CD8-positive, alpha-beta T cell (primary cell): ENCODE measurements at regions of chrX and their contacts with region 1.

Region 1: DNA sequence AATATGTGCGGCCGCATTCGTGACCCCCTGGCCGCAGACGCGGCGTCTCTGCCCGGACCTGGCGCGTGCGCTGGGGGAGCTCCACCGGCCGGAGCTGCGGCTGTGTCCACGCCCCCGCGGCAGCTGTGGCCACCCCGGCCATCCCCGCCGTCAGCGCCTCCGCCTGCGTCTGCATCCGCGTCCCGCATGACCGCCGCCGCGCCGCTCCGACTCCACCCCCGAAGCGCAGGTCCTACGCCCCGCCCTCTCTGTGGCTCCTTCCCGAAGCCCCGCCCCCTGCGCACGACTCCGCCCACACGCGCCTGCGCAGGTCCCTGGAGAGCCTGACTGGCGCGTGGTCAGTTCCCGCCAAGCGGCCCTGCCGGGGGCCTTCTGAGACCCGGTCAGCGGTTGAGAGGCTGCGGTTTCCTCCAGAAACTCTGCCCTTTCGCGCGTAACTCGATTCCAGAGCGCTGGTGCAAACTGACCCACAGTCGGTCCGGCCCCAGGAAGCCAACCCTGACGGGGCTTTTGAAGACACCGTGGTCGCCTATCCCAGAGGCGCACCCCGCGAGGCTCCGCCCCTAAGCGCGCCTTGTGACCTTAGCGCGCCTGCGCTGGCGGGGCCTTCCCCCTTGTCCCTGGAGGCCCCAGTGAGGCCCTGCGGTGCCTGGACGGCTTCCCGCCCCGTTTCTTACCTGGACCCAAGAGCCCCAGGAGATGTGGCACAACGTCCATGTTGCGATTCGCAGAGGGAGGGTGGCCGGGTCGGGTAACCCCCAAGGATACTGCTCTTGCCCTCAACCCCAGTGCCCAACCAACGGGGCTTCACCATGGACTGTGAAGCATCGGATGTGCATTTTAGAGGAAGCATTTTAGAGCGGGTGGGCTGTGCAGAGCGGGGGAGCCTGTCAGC is at the start of gene LAGE3:
- DNase-seq: peak; percentile 86 to 98 (median 93)
- ATAC-seq: peak; percentile 93
- H3K4me3 ChIP-seq: peak within 1 kb of the TSS; percentile 54 to 72
- H3K4me3 Mint-ChIP-seq: peak within 1 kb of the TSS; percentile 82
- H3K27ac ChIP-seq: peak within 1 kb of the TSS; percentile 66 to 82
- H3K27ac Mint-ChIP-seq: peak within 1 kb of the TSS; percentile 84
- H3K4me1 ChIP-seq: peaks cover 28% of the 10 kb centered on the region
- H3K4me1 Mint-ChIP-seq: peaks cover 25% of the 10 kb centered on the region
- H3K27me3 ChIP-seq: no peaks in the 10 kb centered on the region
- H3K27me3 Mint-ChIP-seq: no peaks in the 10 kb centered on the region
- CTCF ChIP-seq: no peak
- total RNA-seq, gene LAGE3: 6.3 to 6.6 TPM

Region 2: DNA sequence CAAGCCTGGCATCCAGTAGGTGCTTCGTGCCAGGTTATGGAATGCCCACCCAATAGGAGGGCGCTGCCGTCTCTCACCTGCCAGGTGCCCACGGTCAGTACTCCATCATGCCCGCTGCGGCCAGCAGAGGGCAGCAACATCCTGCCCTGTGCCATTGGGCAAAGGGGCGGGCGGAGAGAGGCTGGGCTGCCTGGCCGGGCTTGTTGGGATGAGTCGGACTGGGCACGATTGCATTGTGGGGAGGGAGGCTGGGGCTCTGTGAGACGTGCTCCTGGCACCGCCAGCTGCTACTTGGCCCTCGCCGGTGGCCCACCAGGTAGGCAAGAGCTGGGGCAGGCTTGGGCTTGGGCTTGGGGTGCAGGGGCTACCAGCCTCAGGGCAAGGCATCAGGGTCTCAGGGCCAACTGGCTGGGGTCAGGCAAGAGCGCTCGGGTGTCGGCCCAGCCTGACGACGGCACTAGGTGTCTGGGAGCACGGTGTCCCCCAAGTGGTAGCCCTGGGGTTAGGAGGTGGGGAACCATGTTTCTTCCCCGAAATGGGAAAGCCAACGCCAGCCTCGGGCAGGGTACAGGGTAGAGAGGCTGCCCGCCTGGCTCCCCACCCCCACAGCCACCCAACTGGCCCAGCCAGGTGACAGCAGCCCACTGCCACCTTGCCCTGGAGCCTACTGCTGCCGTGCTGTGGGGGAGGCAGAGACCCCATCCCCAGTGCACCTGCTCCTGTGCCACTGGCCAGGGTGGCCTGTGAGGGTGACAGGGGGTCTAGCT is 714.8 kb before region 1 on chrX and contains the start of gene PLXNB3:
- CTCF ChIA-PET with region 1: no interaction called
- POLR2A ChIA-PET with region 1: no interaction called
- intact Hi-C with region 1: no loop called
- DNase-seq: peak; percentile 45 to 89 (median 70)
- ATAC-seq: peak; percentile 88
- H3K4me3 ChIP-seq: no peak within 1 kb of the TSS
- H3K4me3 Mint-ChIP-seq: no peak within 1 kb of the TSS
- H3K27ac ChIP-seq: no peak within 1 kb of the TSS
- H3K27ac Mint-ChIP-seq: no peak within 1 kb of the TSS
- H3K4me1 ChIP-seq: peaks cover 10% of the 10 kb centered on the region
- H3K4me1 Mint-ChIP-seq: peaks cover 10% of the 10 kb centered on the region
- H3K27me3 ChIP-seq: no peaks in the 10 kb centered on the region
- H3K27me3 Mint-ChIP-seq: no peaks in the 10 kb centered on the region
- CTCF ChIP-seq: peak; percentile 52
- total RNA-seq, gene PLXNB3: 0.35 to 0.50 TPM

Region 3: DNA sequence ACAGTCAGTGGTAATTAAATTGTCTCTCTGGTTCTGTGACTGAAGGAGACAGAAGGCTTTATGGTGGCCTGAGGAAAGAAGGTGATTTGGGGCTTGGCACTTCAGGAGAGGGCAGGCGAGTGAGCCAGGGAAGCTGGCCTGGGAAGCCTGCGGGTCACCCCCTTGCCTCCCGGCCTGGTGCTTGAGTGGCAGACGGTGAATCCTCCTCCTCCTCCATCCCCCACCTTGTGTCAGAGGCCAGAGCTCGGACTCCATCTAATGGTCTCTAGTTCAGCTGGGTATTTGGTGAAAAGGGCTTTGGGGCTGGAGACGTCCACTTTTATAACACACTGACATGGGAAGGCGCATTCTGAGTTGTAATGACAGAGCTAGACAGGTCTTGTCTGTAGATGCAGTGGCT is 497.7 kb before region 1 on chrX:
- CTCF ChIA-PET with region 1: no interaction called
- POLR2A ChIA-PET with region 1: no interaction called
- intact Hi-C with region 1: no loop called
- DNase-seq: no peak
- ATAC-seq: no peak
- H3K4me3 ChIP-seq: peak overlapping the region in 1 of 2 experiments; percentile 37
- H3K4me3 Mint-ChIP-seq: peak overlapping the region; percentile 50
- H3K27ac ChIP-seq: peak overlapping the region; percentile 33 to 83
- H3K27ac Mint-ChIP-seq: peak overlapping the region; percentile 84
- H3K4me1 ChIP-seq: peaks cover 49% of the 10 kb centered on the region
- H3K4me1 Mint-ChIP-seq: peaks cover 43% of the 10 kb centered on the region
- H3K27me3 ChIP-seq: no peaks in the 10 kb centered on the region
- H3K27me3 Mint-ChIP-seq: no peaks in the 10 kb centered on the region
- CTCF ChIP-seq: no peak

Region 4: GRCh38 chrX:154428176-154429010 is 50.6 kb before region 1 on chrX and contains the start of gene ATP6AP1:
- CTCF ChIA-PET with region 1: no interaction called
- POLR2A ChIA-PET with region 1: no interaction called
- intact Hi-C with region 1: loop called in 1 of 2 experiments (anchors 1 kb)
- DNase-seq: peak; percentile 71 to 94 (median 86)
- ATAC-seq: peak; percentile 97
- H3K4me3 ChIP-seq: peak within 1 kb of the TSS; percentile 63 to 67
- H3K4me3 Mint-ChIP-seq: peak within 1 kb of the TSS; percentile 82
- H3K27ac ChIP-seq: peak within 1 kb of the TSS; percentile 45 to 63
- H3K27ac Mint-ChIP-seq: peak within 1 kb of the TSS; percentile 86
- H3K4me1 ChIP-seq: peaks cover 12% of the 10 kb centered on the region
- H3K4me1 Mint-ChIP-seq: peaks cover 27% of the 10 kb centered on the region
- H3K27me3 ChIP-seq: no peaks in the 10 kb centered on the region
- H3K27me3 Mint-ChIP-seq: no peaks in the 10 kb centered on the region
- CTCF ChIP-seq: no peak
- total RNA-seq, gene ATP6AP1: 31.2 to 32.4 TPM

Region 5: DNA sequence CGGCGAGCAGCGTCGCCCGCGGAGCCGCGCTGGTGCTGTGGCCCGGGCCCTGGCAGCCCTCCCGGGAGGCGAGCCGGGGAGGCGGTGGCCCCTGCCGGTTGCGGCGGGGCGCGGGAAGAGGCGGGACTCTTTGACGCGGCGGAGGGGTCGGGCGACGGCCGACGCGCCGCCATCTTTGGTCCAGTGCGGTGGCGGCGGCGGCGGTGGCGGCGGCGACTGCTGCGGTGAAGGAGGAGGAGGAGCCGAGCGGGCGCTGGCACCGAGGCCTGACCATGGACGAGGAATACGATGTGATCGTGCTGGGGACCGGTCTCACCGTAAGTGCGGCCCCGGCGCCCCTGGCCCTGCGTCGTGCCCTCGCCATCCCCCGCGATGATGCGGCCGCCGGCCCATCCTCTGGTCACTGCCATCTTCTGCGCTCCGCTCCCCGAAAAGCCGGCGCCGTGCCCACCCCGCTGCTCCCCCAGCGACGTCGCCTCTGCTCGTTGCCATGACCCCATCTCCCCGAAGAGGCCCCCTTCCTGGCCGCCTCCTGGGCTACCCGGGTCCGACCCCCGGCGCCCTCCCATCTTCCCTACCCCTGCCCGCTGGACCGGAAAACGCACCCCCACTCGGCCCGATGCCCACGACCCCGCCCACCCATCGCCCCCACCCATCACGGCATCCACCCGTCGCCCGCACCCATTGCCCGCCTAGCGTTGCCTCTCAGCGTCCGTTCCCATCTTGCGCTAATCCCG is 41.8 kb before region 1 on chrX and contains the start of gene GDI1:
- CTCF ChIA-PET with region 1: interaction called, 3 read pairs
- POLR2A ChIA-PET with region 1: interaction called, 3 read pairs
- intact Hi-C with region 1: loop called (anchors 2 kb)
- DNase-seq: peak in 7 of 9 experiments; percentile 24 to 73 (median 55)
- ATAC-seq: peak; percentile 56
- H3K4me3 ChIP-seq: peak within 1 kb of the TSS; percentile 41 to 58
- H3K4me3 Mint-ChIP-seq: peak within 1 kb of the TSS; percentile 79
- H3K27ac ChIP-seq: peak within 1 kb of the TSS; percentile 30 to 68
- H3K27ac Mint-ChIP-seq: peak within 1 kb of the TSS; percentile 92
- H3K4me1 ChIP-seq: peaks cover 10% of the 10 kb centered on the region
- H3K4me1 Mint-ChIP-seq: peaks cover 28% of the 10 kb centered on the region
- H3K27me3 ChIP-seq: no peaks in the 10 kb centered on the region
- H3K27me3 Mint-ChIP-seq: no peaks in the 10 kb centered on the region
- CTCF ChIP-seq: no peak
- total RNA-seq, gene GDI1: 113 to 119 TPM

Region 6: DNA sequence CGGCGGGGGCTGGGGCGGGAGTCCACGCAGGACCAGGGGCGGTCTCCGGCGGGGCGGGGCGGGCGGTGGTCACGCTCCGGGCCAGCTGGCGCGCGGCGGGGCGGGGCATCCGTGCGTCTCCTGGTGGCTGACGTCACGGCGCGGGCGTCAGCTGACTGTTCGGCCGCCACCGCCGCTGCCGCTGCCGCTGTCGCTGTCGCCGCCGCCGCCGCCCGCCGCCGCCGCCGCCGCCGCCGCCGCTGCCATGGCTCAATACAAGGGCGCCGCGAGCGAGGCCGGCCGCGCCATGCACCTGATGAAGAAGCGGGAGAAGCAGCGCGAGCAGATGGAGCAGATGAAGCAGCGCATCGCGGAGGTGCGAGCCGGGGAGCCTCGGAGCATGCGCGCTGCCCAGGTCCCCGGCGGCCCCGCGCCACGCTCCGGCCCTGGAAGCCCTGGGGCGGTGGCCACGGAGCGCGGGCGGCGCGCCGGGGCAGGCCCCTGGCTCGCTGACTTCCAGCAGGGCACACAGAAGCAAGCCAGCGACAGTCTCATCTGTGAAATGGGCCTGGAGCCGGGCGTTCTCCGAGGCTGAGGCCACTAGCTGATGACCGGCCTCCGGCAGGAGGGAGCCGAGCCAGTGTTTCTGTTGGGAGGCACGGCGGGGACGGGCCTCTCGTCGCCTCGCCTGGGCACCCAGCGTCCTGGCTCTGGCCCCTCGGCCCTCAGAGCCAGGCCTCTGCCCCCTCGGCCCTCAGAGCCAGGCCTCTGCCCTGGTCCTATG is 34.8 kb before region 1 on chrX and contains the start of gene FAM50A:
- CTCF ChIA-PET with region 1: no interaction called
- POLR2A ChIA-PET with region 1: no interaction called
- intact Hi-C with region 1: loop called in 1 of 2 experiments (anchors 2 kb)
- DNase-seq: peak; percentile 29 to 86 (median 66)
- ATAC-seq: peak; percentile 79
- H3K4me3 ChIP-seq: peak within 1 kb of the TSS; percentile 50 to 54
- H3K4me3 Mint-ChIP-seq: peak within 1 kb of the TSS; percentile 77
- H3K27ac ChIP-seq: peak within 1 kb of the TSS; percentile 42 to 74
- H3K27ac Mint-ChIP-seq: peak within 1 kb of the TSS; percentile 87
- H3K4me1 ChIP-seq: peaks cover 17% of the 10 kb centered on the region
- H3K4me1 Mint-ChIP-seq: peaks cover 20% of the 10 kb centered on the region
- H3K27me3 ChIP-seq: no peaks in the 10 kb centered on the region
- H3K27me3 Mint-ChIP-seq: no peaks in the 10 kb centered on the region
- CTCF ChIP-seq: no peak
- total RNA-seq, gene FAM50A: 39.6 to 40.4 TPM

Region 7: GRCh38 chrX:154458114-154458953 is 20.6 kb before region 1 on chrX and contains the start of gene PLXNA3:
- CTCF ChIA-PET with region 1: interaction called, 4 read pairs
- POLR2A ChIA-PET with region 1: no interaction called
- intact Hi-C with region 1: loop called in 1 of 2 experiments (anchors 2 kb)
- DNase-seq: peak; percentile 44 to 86 (median 64)
- ATAC-seq: peak; percentile 77
- H3K4me3 ChIP-seq: peak within 1 kb of the TSS; percentile 43 to 63
- H3K4me3 Mint-ChIP-seq: peak within 1 kb of the TSS; percentile 96
- H3K27ac ChIP-seq: peak within 1 kb of the TSS in 1 of 2 experiments; percentile 33
- H3K27ac Mint-ChIP-seq: peak within 1 kb of the TSS; percentile 94
- H3K4me1 ChIP-seq: peaks cover 5% of the 10 kb centered on the region
- H3K4me1 Mint-ChIP-seq: peaks cover 9% of the 10 kb centered on the region
- H3K27me3 ChIP-seq: no peaks in the 10 kb centered on the region
- H3K27me3 Mint-ChIP-seq: no peaks in the 10 kb centered on the region
- CTCF ChIP-seq: no peak
- total RNA-seq, gene PLXNA3: 46.7 to 52.1 TPM

Region 8: GRCh38 chrX:154515878-154516655 is 37.1 kb after region 1 on chrX and contains the start of gene FAM3A:
- CTCF ChIA-PET with region 1: no interaction called
- POLR2A ChIA-PET with region 1: interaction called, 4 read pairs
- intact Hi-C with region 1: loop called (anchors 1 to 2 kb)
- DNase-seq: peak; percentile 83 to 96 (median 91)
- ATAC-seq: peak; percentile 94
- H3K4me3 ChIP-seq: peak within 1 kb of the TSS; percentile 64 to 68
- H3K4me3 Mint-ChIP-seq: peak within 1 kb of the TSS; percentile 81
- H3K27ac ChIP-seq: peak within 1 kb of the TSS; percentile 70 to 76
- H3K27ac Mint-ChIP-seq: peak within 1 kb of the TSS; percentile 92
- H3K4me1 ChIP-seq: peaks cover 39% of the 10 kb centered on the region
- H3K4me1 Mint-ChIP-seq: peaks cover 27% of the 10 kb centered on the region
- H3K27me3 ChIP-seq: no peaks in the 10 kb centered on the region
- H3K27me3 Mint-ChIP-seq: no peaks in the 10 kb centered on the region
- CTCF ChIP-seq: no peak
- total RNA-seq, gene FAM3A: 37.7 to 41.7 TPM